ENCODE measurements at regions of chr17 and their contacts with region 1.

Region 1: GRCh38 chr17:8156246-8156992 is 4.2 kb upstream of the PER1 start:
- DNase-seq: peak; percentile 99 to 100
- H3K4me3 ChIP-seq: peak overlapping the region; percentile 60
- H3K27ac ChIP-seq: peak overlapping the region; percentile 82
- H3K4me1 ChIP-seq: peaks cover 25% of the 10 kb centered on the region
- H3K27me3 ChIP-seq: no peaks in the 10 kb centered on the region
- CTCF ChIP-seq: no peak

Region 2: GRCh38 chr17:7844292-7845154 is 311.9 kb before region 1 on chr17:
- CTCF ChIA-PET with region 1: no interaction called
- POLR2A ChIA-PET with region 1: no interaction called
- intact Hi-C with region 1: loop called (anchors 5 kb)
- DNase-seq: peak; percentile 78 to 93
- H3K4me3 ChIP-seq: peak overlapping the region; percentile 93
- H3K27ac ChIP-seq: peak overlapping the region; percentile 92
- H3K4me1 ChIP-seq: peaks cover 10% of the 10 kb centered on the region
- H3K27me3 ChIP-seq: no peaks in the 10 kb centered on the region
- CTCF ChIP-seq: no peak

Region 3: GRCh38 chr17:7867881-7868329 is 288.5 kb before region 1 on chr17:
- CTCF ChIA-PET with region 1: no interaction called
- POLR2A ChIA-PET with region 1: no interaction called
- intact Hi-C with region 1: no loop called
- DNase-seq: no peak
- H3K4me3 ChIP-seq: no peak overlapping the region
- H3K27ac ChIP-seq: no peak overlapping the region
- H3K4me1 ChIP-seq: no peaks in the 10 kb centered on the region
- H3K27me3 ChIP-seq: no peaks in the 10 kb centered on the region
- CTCF ChIP-seq: no peak

Region 4: GRCh38 chr17:7887482-7888183 is 268.8 kb before region 1 on chr17:
- CTCF ChIA-PET with region 1: no interaction called
- POLR2A ChIA-PET with region 1: no interaction called
- intact Hi-C with region 1: loop called (anchors 2 kb)
- DNase-seq: peak; percentile 88 to 94
- H3K4me3 ChIP-seq: peak overlapping the region; percentile 84
- H3K27ac ChIP-seq: peak overlapping the region; percentile 80
- H3K4me1 ChIP-seq: peaks cover 27% of the 10 kb centered on the region
- H3K27me3 ChIP-seq: no peaks in the 10 kb centered on the region
- CTCF ChIP-seq: no peak

Region 5: DNA sequence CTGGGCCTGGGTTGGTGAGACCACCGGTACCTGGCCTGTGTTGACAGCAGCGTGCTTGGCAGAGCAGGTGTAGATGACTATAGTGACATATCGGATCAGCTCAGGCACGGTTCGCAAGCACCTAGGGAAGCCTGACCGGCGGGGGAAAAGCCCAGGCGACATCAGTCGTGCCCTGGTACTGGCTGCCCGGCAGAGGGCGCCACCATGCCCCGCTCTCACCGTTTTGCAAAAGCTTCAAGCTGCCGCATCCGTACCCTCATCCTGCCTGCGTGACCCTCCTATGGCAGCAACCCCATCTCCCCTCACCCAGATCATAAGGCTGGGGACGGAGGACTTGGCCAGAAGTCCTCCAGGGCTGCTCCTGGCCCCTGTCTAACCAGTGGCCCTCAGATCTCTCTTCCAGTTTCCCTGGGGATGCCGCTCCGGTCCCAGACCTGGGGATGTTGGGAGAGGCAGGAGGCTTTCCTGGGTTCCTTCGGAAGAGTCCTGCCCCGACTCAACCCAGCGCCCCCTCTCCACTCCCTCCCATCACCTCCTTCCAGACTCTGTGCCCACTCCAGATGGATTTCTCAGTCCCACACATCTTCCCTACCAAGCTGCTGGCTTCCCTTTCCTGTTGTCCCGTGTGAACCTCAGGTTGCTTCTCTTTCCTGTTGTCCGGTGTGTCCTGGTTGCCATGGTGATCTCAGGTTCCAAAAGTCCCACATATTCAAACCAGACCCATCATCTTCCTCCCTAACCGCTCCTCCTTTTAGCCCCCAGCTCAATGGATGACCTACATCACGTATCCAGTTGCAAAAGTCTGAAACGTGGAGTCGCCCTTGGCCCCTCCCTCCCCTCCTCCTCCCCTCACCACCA is 82.6 kb before region 1 on chr17:
- CTCF ChIA-PET with region 1: no interaction called
- POLR2A ChIA-PET with region 1: no interaction called
- intact Hi-C with region 1: loop called (anchors 5 kb)
- DNase-seq: peak in 1 of 2 experiments; percentile 77
- H3K4me3 ChIP-seq: no peak overlapping the region
- H3K27ac ChIP-seq: no peak overlapping the region
- H3K4me1 ChIP-seq: no peaks in the 10 kb centered on the region
- H3K27me3 ChIP-seq: peaks cover 16% of the 10 kb centered on the region
- CTCF ChIP-seq: peak; percentile 76

Region 6: DNA sequence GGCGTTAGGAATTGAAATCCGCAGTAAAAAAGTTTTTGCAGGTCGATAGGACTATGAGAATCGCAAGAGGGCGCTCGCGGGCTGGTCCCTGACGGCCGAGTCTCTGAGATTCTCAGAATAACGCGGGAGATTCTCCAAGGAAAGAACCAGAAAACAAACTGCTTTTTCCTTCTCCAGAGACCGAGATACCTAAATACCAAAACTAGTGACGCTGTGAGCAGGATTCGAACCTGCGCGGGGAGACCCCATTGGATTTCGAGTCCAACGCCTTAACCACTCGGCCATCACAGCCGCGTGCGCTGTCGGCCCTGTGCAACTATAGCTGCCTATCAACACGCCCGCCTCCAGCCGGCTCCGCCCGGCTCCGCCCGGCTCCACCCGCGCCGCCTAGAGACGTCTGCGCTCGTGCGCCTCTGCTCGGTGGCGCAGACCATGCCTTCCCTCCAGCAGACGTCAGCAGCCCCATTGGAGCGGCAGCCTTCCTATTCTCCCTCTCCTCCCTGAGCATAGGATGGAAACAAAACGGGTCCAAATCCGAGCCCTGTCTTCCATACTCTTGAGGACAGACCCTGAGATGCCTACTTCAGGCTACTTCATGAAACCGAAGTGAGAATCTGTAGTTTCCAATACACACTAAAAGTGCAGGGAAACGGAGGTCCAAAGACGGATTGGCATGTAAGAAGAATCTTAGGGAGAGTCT is 17.6 kb before region 1 on chr17:
- CTCF ChIA-PET with region 1: interaction called, 11 read pairs
- POLR2A ChIA-PET with region 1: interaction called, 6 read pairs
- intact Hi-C with region 1: loop called (anchors 1 kb)
- DNase-seq: peak; percentile 92 to 99
- H3K4me3 ChIP-seq: peak overlapping the region; percentile 78
- H3K27ac ChIP-seq: peak overlapping the region; percentile 69
- H3K4me1 ChIP-seq: peaks cover 14% of the 10 kb centered on the region
- H3K27me3 ChIP-seq: no peaks in the 10 kb centered on the region
- CTCF ChIP-seq: peak; percentile 78

Region 7: DNA sequence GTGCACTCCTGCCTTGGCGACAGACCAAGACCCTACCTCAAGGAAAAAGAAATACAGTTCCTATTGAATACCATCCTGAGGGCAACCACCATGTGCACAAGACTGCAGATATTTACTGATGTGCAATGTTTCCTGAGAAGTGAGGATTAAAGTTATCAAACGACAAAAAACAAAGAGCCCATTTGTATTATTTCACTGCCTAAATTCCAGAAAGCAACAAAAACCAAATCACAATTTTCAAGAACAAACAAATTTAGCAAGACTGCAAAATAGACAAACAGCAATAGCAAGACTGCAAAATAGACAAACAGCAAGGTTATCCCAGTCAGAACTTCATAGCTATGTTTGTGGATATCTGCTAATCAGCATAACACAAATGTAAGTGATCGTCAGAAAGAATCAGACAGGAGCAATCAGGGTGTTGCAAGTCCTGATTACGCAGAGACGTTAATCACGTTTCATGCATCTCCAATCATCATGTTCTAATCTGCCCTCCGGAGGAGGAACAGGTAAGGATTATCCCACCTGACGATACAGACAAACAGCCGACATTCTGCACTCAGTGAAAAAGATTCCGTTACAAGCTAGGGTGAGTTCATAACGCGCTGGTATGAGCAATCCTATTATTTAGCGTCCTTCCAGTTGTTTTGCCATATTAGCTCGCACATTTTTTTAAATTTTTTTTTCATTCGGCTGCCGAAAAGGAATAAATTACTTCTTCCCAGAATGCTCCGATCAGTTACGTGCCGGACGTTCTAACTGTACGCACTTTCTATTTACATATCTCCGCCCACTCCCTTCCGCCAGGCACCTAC is 16.8 kb after region 1 on chr17:
- CTCF ChIA-PET with region 1: interaction called, 3 read pairs
- POLR2A ChIA-PET with region 1: interaction called, 13 read pairs
- intact Hi-C with region 1: loop called (anchors 1 kb)
- DNase-seq: peak; percentile 79 to 96
- H3K4me3 ChIP-seq: peak overlapping the region; percentile 63
- H3K27ac ChIP-seq: peak overlapping the region; percentile 93
- H3K4me1 ChIP-seq: 0 out of 2 replicates have a peak, but pooled peaks cover 7% of the 10 kb centered on the region
- H3K27me3 ChIP-seq: no peaks in the 10 kb centered on the region
- CTCF ChIP-seq: no peak

Region 8: DNA sequence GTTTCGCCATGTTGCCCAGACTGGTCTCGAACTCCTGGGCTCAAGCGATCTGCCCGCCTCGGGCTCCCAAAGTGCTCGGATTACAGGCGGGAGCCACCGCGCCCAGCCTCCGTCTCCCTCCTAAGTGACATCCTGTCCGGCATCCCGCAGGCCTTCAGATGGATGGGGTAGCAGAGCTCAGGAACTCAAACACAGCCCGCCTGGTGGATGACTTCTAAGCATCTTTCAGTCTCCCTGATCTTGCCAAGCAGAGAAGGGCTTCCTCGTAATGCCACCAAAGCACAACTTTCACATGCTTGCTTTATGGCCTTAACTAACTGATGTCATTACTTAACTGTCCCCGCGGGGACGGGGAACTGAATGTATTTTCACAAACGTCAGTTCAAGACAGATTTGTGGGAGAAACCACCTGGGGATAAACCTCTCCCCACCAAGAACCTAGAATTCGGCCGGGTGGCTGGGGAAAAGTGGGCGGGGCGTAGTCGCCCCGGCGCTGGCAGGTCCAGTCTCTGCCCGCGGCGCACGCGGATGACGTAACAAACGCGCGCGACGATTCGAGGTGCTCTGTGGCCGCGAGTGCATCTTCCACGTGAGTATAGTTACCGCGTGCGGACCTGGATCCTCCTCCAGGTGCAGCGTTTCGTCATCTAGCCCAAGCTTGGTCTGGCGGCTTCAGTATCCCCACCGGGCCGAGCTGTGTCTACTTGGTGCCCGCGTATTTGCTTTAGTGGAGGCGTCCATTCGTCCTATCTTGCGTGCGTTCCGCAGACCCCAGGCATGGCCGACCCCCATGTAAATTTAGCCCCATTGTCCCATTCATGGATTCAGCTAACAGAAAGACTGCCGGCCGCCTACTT is 92.6 kb after region 1 on chr17 and contains the start of gene PFAS:
- CTCF ChIA-PET with region 1: interaction called, 12 read pairs
- POLR2A ChIA-PET with region 1: interaction called, 17 read pairs
- intact Hi-C with region 1: no loop called
- DNase-seq: peak; percentile 83 to 96
- H3K4me3 ChIP-seq: peak within 1 kb of the TSS; percentile 99
- H3K27ac ChIP-seq: peak within 1 kb of the TSS; percentile 93
- H3K4me1 ChIP-seq: peaks cover 8% of the 10 kb centered on the region; the same call in 1 of the 2 replicates
- H3K27me3 ChIP-seq: no peaks in the 10 kb centered on the region
- CTCF ChIP-seq: no peak
- total RNA-seq, gene PFAS: 54.5 and 68.2 TPM in 2 replicates